Activated CD4-positive, alpha-beta memory T cell treated with anti-CD3 and anti-CD28 coated beads, Interleukin-2, amount 10 ng/mL, durations not matched to agents 7 days and 5 days (primary cell): ENCODE measurements at regions of chr3 and their contacts with region 1.

Region 1: GRCh38 chr3:143001369-143002082 is at the start of gene U2SURP:
- DNase-seq: peak; percentile 94
- H3K4me3 Mint-ChIP-seq: peak within 1 kb of the TSS; percentile 96
- H3K27ac Mint-ChIP-seq: peak within 1 kb of the TSS; percentile 96
- H3K4me1 Mint-ChIP-seq: peaks cover 44% of the 10 kb centered on the region
- H3K27me3 Mint-ChIP-seq: peaks cover under 1% of the 10 kb centered on the region
- total RNA-seq, gene U2SURP: 106 to 120 TPM

Region 2: GRCh38 chr3:142447852-142448823 is 553.4 kb before region 1 on chr3 and contains the start of gene XRN1:
- CTCF ChIA-PET with region 1: no interaction called
- POLR2A ChIA-PET with region 1: interaction called, 19 read pairs
- DNase-seq: peak; percentile 96
- H3K4me3 Mint-ChIP-seq: peak within 1 kb of the TSS; percentile 90
- H3K27ac Mint-ChIP-seq: peak within 1 kb of the TSS; percentile 97
- H3K4me1 Mint-ChIP-seq: peaks cover 26% of the 10 kb centered on the region
- H3K27me3 Mint-ChIP-seq: no peaks in the 10 kb centered on the region
- total RNA-seq, gene XRN1: 100 to 103 TPM

Region 3: GRCh38 chr3:142828703-142829305 is 172.7 kb before region 1 on chr3:
- CTCF ChIA-PET with region 1: interaction called, 11 read pairs
- POLR2A ChIA-PET with region 1: interaction called, 4 read pairs
- DNase-seq: peak; percentile 74
- H3K4me3 Mint-ChIP-seq: no peak overlapping the region
- H3K27ac Mint-ChIP-seq: no peak overlapping the region
- H3K4me1 Mint-ChIP-seq: no peaks in the 10 kb centered on the region
- H3K27me3 Mint-ChIP-seq: peaks cover 19% of the 10 kb centered on the region

Region 4: DNA sequence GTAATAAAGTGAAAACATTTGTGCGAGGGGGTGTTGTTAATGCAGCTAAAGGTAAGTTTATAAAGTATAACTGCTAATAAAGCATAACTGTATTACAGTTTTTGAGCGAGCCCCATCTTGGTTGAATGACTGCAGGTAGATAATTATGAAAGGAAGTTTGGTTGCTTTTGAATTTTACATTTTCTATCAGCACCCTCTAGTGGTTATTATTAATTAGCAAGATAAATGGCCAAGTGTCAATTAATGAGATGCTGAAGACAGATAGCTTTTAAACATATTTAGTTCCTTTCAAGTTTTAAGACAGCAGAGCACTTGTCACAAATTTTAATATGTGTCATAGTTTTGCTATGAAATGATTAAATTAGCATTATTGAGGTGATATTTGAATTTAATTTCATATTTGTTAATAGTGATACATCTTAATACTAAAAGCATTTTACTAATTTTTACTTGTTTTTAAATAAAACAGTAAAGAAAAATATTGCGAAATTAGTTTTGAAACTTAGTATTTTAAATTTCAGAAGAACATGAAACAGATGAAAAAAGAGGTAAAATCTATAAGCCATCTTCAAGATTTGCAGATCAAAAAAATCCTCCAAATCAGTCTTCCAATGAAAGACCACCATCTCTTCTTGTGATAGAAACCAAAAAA is 14.9 kb after region 1 on chr3:
- CTCF ChIA-PET with region 1: interaction called, 49 read pairs
- POLR2A ChIA-PET with region 1: interaction called, 97 read pairs
- DNase-seq: no peak
- H3K4me3 Mint-ChIP-seq: no peak overlapping the region
- H3K27ac Mint-ChIP-seq: no peak overlapping the region
- H3K4me1 Mint-ChIP-seq: peaks cover 17% of the 10 kb centered on the region
- H3K27me3 Mint-ChIP-seq: no peaks in the 10 kb centered on the region

Region 5: GRCh38 chr3:143847787-143848631 is 846.5 kb after region 1 on chr3 and contains the start of gene SLC9A9:
- CTCF ChIA-PET with region 1: no interaction called
- POLR2A ChIA-PET with region 1: interaction called, 11 read pairs
- DNase-seq: peak; percentile 53
- H3K4me3 Mint-ChIP-seq: peak within 1 kb of the TSS; percentile 95
- H3K27ac Mint-ChIP-seq: peak within 1 kb of the TSS; percentile 93
- H3K4me1 Mint-ChIP-seq: peaks cover 53% of the 10 kb centered on the region
- H3K27me3 Mint-ChIP-seq: no peaks in the 10 kb centered on the region
- total RNA-seq, gene SLC9A9: 16.9 to 18.5 TPM